Activated T-helper 1 cell treated with anti-CD3 and anti-CD28 coated beads, Interleukin-12 subunit alpha, Interleukin-12 subunit beta, Interleukin-2, Interleukin-4 antibody, amounts not matched to agents 30 ng/mL and 10 ng/mL and 1 ng/mL, durations not matched to agents 14 hours and 24 hours and 36 hours (primary cell): ENCODE measurements at regions of chr15 and their contacts with region 1.

Region 1: GRCh38 chr15:85618956-85619491 is 175.7 kb downstream of the KLHL25 start:
- DNase-seq: peak; percentile 42
- H3K4me3 Mint-ChIP-seq: no peak overlapping the region
- H3K27ac Mint-ChIP-seq: no peak overlapping the region
- H3K4me1 Mint-ChIP-seq: peaks cover 22% of the 10 kb centered on the region
- H3K27me3 Mint-ChIP-seq: no peaks in the 10 kb centered on the region

Region 2: GRCh38 chr15:85543741-85544155 is 75.3 kb before region 1 on chr15:
- intact Hi-C with region 1: loop called (anchors 1 kb)
- DNase-seq: peak; percentile 22
- H3K4me3 Mint-ChIP-seq: peak overlapping the region; percentile 50
- H3K27ac Mint-ChIP-seq: peak overlapping the region; percentile 59
- H3K4me1 Mint-ChIP-seq: peaks cover 83% of the 10 kb centered on the region
- H3K27me3 Mint-ChIP-seq: no peaks in the 10 kb centered on the region

Region 3: GRCh38 chr15:85632014-85632413 is 13.0 kb after region 1 on chr15:
- intact Hi-C with region 1: no loop called
- DNase-seq: no peak
- H3K4me3 Mint-ChIP-seq: no peak overlapping the region
- H3K27ac Mint-ChIP-seq: no peak overlapping the region
- H3K4me1 Mint-ChIP-seq: peaks cover 25% of the 10 kb centered on the region
- H3K27me3 Mint-ChIP-seq: no peaks in the 10 kb centered on the region

Region 4: GRCh38 chr15:85646538-85647091 is 27.6 kb after region 1 on chr15:
- intact Hi-C with region 1: loop called (anchors 1 kb)
- DNase-seq: peak; percentile 14
- H3K4me3 Mint-ChIP-seq: peak overlapping the region; percentile 30
- H3K27ac Mint-ChIP-seq: peak overlapping the region; percentile 92
- H3K4me1 Mint-ChIP-seq: peaks cover 44% of the 10 kb centered on the region
- H3K27me3 Mint-ChIP-seq: no peaks in the 10 kb centered on the region

Region 5: GRCh38 chr15:85658816-85659215 is 39.8 kb after region 1 on chr15:
- intact Hi-C with region 1: no loop called
- DNase-seq: no peak
- H3K4me3 Mint-ChIP-seq: no peak overlapping the region
- H3K27ac Mint-ChIP-seq: no peak overlapping the region
- H3K4me1 Mint-ChIP-seq: no peaks in the 10 kb centered on the region
- H3K27me3 Mint-ChIP-seq: no peaks in the 10 kb centered on the region

Region 6: DNA sequence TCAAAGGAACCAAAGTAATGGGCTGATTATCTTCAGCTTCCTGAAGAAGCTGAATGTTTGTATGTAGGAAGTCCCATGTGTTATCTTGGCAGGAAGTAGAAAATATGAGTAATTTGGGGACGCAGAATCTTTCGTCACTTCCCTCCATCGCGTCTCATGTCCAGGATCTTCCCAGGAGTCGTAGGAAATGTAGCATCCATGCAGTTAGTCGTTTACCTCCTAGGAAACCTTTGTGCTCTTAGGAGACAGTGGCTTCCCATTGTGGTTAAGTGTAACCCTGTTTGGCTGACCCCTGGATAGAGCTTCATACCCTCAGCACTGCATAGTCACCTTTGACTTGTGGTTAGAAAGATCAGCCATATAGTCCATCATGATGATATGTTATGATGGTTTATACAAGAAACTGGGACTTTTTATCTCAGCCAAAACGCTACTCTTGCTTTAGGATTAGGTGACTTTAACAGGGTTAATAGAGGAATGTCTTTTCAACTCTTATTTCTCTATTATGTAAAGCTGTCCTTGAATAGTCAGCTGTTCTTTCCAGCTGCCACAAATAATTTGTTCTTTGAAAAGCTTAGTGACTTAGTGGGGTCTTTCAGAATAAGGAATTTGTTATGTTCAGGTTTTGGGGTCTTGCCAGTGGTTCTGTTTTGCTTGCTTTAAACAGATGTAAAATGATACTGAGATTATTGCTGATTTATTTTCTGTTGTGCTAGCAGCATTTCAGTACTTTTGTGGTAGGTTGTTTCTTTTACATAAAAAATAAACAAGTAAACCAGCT is 83.5 kb after region 1 on chr15:
- intact Hi-C with region 1: loop called (anchors 1 kb)
- DNase-seq: peak; percentile 29
- H3K4me3 Mint-ChIP-seq: peak overlapping the region; percentile 78
- H3K27ac Mint-ChIP-seq: peak overlapping the region; percentile 98
- H3K4me1 Mint-ChIP-seq: peaks cover 66% of the 10 kb centered on the region
- H3K27me3 Mint-ChIP-seq: no peaks in the 10 kb centered on the region

Region 7: DNA sequence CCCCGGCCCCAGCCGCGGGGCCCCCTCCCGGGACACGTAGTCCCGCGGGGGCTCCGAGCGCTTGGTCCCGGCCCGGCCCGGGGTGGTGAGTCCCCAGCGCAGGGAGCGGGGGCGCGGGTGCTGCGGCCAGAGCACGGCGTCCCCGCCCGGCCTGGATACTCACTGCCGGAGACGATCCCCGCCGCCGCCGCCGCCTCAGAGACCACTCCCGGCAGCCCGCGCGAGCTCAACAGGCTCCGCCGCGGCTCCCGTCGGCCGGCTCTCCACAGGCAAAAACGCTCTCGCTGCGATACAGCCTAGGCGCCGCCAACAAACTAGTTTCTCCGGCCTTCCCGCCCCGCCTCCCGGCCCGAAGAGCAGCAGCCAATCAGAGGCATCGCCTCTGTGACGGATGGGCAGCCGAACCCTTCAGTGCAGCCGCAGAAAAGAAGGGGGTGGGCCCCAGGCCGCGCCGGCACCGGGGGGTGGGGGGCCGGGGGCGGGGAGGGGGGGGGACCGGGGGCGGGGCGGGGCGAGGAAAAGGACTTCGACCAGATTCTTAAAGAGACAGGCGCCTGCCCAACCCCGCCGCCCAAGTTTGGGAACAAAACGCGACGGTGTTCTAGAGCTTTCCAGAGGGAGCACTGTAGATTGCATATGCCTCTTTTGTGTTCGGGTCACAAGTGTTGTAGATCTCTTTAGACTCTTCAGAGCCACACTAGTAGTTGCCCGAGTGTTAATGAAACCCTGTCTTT is 175.7 kb after region 1 on chr15 and contains the start of gene KLHL25:
- intact Hi-C with region 1: loop called (anchors 5 kb)
- DNase-seq: peak; percentile 92
- H3K4me3 Mint-ChIP-seq: peak within 1 kb of the TSS; percentile 91
- H3K27ac Mint-ChIP-seq: peak within 1 kb of the TSS; percentile 83
- H3K4me1 Mint-ChIP-seq: peaks cover 31% of the 10 kb centered on the region
- H3K27me3 Mint-ChIP-seq: peaks cover 4% of the 10 kb centered on the region
- total RNA-seq, gene KLHL25: 10.7 and 11.0 TPM in 2 replicates